ENCODE measurements at regions of chr6 and their contacts with region 1.

Region 1: GRCh38 chr6:149082286-149082707 is 235.2 kb upstream of the TAB2 start:
- DNase-seq: peak; percentile 79
- H3K4me3 Mint-ChIP-seq: no peak overlapping the region
- H3K27ac Mint-ChIP-seq: peak overlapping the region; percentile 77
- H3K4me1 Mint-ChIP-seq: peaks cover 79% of the 10 kb centered on the region
- H3K27me3 Mint-ChIP-seq: no peaks in the 10 kb centered on the region

Region 2: DNA sequence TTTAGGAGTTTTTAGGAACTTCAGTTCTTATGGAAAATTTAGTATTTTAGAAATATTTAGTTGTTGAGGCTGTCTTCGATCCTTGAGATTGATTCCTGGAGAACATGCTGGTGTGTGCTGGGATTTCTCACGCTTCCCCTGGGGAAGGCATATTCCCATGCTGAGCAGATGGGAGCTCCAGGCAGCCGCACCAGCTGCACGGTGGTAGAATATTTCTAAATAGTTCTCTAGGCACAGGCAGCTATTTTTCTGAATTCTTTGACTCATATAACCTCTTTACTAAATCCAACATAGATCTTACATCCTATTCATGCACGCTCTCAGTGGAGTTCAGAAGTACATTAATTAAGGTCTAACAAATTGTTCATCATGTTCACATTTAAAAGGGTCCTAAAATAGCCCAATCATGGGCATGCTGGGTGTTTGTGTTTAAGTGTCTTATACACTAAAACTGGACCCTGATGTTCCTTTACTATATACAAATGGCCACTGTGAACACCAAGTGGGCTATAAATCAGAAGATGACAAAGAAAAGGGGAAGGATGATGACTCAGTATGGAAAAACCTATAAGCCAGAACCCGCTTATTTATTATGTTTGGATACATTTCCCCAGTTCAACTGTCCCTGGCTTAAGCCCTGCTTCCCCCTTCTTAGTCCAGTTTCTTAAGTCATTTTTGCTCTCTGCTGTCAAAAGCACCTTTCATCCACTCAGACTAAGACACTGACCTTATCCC is 197.0 kb before region 1 on chr6:
- intact Hi-C with region 1: no loop called
- DNase-seq: no peak
- H3K4me3 Mint-ChIP-seq: no peak overlapping the region
- H3K27ac Mint-ChIP-seq: no peak overlapping the region
- H3K4me1 Mint-ChIP-seq: no peaks in the 10 kb centered on the region
- H3K27me3 Mint-ChIP-seq: peaks cover 13% of the 10 kb centered on the region

Region 3: DNA sequence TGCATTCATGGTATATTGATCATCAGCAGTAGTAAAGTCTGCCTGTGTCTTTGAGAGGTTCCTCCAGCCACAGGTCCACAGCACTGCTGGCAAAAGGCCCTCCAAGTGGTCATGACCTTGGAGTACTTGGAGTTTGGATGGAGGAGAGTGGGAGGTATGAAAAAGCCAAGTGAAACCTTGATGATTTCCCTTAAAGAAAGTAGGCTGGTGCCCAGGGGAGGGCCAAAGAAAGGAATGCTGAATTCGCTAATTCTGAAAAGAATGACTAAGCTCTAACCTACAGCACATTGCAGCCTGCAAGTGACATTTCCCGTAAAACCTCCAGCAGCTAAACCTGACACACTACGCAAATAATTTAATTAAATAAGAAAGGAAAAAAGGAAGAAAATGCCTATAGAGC is 11.9 kb after region 1 on chr6:
- intact Hi-C with region 1: loop called (anchors 1 kb)
- DNase-seq: no peak
- H3K4me3 Mint-ChIP-seq: peak overlapping the region; percentile 50
- H3K27ac Mint-ChIP-seq: peak overlapping the region; percentile 84
- H3K4me1 Mint-ChIP-seq: peaks cover 63% of the 10 kb centered on the region
- H3K27me3 Mint-ChIP-seq: no peaks in the 10 kb centered on the region

Region 4: DNA sequence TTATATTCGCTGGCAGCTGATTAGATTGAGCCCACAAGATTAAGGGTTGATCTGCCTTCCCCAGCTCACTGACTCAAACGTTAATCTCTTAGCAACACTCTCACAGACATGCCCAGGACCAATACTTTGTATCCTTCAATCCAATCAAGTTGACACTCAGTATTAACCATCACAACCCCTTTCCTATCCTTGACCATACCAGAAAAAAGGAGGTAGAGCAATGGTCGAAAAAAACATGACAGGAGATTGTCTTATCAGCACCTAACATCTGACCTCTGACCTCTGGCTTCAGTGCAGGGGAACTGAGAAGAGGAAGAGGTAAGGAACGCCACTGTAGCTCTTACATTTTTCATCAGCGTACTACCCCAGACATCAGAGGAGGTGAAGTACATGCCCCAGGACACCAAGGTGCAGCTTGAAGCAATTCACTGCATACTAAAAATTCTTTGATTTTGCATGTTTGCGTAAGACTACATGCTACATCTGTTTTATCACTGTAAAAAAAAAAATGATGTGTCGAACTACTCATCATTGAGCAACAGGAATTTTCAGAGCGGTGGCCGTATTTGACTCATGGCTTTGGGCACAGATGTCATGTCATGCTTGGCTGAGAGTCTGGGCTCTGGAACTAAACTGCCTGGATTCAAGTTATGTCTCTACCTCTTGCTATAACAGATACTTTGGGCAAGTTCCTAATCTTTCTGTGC is 47.2 kb after region 1 on chr6:
- intact Hi-C with region 1: loop called (anchors 2 kb)
- DNase-seq: no peak
- H3K4me3 Mint-ChIP-seq: no peak overlapping the region
- H3K27ac Mint-ChIP-seq: peak overlapping the region; percentile 90
- H3K4me1 Mint-ChIP-seq: peaks cover 65% of the 10 kb centered on the region
- H3K27me3 Mint-ChIP-seq: no peaks in the 10 kb centered on the region

Region 5: GRCh38 chr6:149140137-149140909 is 58.0 kb after region 1 on chr6:
- intact Hi-C with region 1: loop called (anchors 2 kb)
- DNase-seq: no peak
- H3K4me3 Mint-ChIP-seq: peak overlapping the region; percentile 84
- H3K27ac Mint-ChIP-seq: peak overlapping the region; percentile 100
- H3K4me1 Mint-ChIP-seq: peaks cover 46% of the 10 kb centered on the region
- H3K27me3 Mint-ChIP-seq: no peaks in the 10 kb centered on the region

Region 6: DNA sequence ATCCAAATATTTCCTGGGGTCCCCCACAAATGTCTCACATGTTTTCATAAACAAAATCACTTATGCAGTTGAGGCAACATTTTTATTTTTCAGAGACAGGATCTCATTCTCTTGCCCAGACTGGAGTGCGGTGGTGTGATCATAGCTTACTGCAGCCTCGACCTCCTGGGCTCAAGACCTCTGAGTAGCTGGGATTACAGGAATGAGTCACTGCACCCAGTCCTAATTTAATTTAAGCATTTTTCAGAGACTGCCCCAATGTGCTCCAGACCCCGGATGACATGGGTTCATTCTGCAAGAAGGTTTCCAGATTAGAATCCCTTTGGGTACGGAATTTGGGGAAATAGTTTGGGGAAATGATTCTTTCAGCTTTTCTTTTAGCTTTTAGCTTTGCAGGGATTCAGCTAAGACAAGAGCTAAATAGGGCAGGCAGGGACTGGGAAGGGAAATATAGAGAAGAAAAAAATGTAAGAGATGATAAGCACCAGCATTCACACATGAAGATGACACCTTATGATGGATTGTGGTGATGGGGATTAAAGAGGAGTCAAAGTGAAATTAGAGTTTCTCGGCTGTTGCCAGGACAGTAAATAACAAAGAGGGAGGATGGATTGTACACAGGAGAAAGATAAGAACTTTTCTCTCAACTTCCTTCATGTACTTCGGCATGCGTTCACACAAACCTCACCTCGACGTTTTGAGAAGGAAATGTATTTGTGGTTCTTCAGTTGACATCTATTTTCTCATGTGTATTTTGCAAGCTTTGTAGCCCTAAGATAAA is 65.8 kb after region 1 on chr6:
- intact Hi-C with region 1: loop called (anchors 1 kb)
- DNase-seq: peak; percentile 41
- H3K4me3 Mint-ChIP-seq: peak overlapping the region; percentile 31
- H3K27ac Mint-ChIP-seq: peak overlapping the region; percentile 97
- H3K4me1 Mint-ChIP-seq: peaks cover 73% of the 10 kb centered on the region
- H3K27me3 Mint-ChIP-seq: no peaks in the 10 kb centered on the region

Region 7: GRCh38 chr6:149246691-149247384 is 164.5 kb after region 1 on chr6:
- intact Hi-C with region 1: no loop called
- DNase-seq: no peak
- H3K4me3 Mint-ChIP-seq: no peak overlapping the region
- H3K27ac Mint-ChIP-seq: peak overlapping the region; percentile 63
- H3K4me1 Mint-ChIP-seq: peaks cover 34% of the 10 kb centered on the region
- H3K27me3 Mint-ChIP-seq: no peaks in the 10 kb centered on the region

Region 8: GRCh38 chr6:149431905-149432775 is 349.8 kb after region 1 on chr6:
- intact Hi-C with region 1: loop called (anchors 1 kb)
- DNase-seq: peak; percentile 78
- H3K4me3 Mint-ChIP-seq: no peak overlapping the region
- H3K27ac Mint-ChIP-seq: peak overlapping the region; percentile 64
- H3K4me1 Mint-ChIP-seq: peaks cover 14% of the 10 kb centered on the region
- H3K27me3 Mint-ChIP-seq: no peaks in the 10 kb centered on the region

Region 9: GRCh38 chr6:149513915-149514314 is 431.6 kb after region 1 on chr6:
- intact Hi-C with region 1: loop called (anchors 1 kb)
- DNase-seq: no peak
- H3K4me3 Mint-ChIP-seq: no peak overlapping the region
- H3K27ac Mint-ChIP-seq: no peak overlapping the region
- H3K4me1 Mint-ChIP-seq: peaks cover 39% of the 10 kb centered on the region
- H3K27me3 Mint-ChIP-seq: no peaks in the 10 kb centered on the region